MCF 10A (cell line): ENCODE measurements at regions of chr3 and their contacts with region 1.

Region 1: DNA sequence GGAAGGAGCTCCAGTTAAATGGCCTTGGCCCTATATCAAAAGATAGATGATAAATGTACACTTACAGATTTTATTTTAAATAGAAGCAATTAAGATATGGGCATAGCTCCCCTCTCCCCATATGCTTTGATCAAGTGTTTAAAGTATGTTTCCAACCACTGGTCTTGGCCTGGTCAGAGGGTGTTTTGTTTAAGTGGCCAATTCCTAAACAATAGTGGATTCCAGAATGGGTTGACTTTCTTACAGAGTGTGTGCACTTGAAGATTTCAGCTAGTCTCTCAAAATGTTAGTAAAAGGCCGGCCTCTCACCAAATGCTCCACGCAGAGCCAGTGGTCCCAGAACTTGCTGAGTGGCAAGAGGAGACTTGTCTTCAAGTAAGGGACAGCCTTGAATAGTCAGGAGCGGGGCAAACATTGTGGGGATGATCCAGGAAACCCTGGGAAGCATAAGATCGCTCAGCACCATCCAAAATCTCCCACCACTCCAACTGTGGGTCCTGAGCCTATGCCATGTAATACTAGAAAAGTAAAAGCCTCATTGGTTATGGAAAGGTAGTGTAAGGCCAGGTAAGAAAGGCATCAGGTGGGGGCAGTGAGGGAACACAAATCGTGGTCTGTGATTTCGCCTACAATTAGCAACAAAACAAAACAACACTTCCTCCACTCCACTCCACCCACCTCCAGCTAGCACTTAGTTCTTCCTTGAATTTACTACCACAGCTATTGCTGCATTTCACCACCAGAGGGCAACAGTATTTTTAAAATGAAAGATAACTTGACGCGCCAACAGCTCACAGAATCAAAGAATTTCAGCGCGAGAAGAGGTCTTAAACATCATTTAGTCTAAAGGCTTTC is 4.8 kb downstream of the RARRES1 start:
- DNase-seq: peak; percentile 72
- H3K4me3 Mint-ChIP-seq: peak overlapping the region; percentile 38
- H3K27ac Mint-ChIP-seq: no peak overlapping the region
- H3K4me1 Mint-ChIP-seq: peaks cover 11% of the 10 kb centered on the region
- H3K27me3 Mint-ChIP-seq: no peaks in the 10 kb centered on the region
- CTCF ChIP-seq: peak; percentile 47

Region 2: DNA sequence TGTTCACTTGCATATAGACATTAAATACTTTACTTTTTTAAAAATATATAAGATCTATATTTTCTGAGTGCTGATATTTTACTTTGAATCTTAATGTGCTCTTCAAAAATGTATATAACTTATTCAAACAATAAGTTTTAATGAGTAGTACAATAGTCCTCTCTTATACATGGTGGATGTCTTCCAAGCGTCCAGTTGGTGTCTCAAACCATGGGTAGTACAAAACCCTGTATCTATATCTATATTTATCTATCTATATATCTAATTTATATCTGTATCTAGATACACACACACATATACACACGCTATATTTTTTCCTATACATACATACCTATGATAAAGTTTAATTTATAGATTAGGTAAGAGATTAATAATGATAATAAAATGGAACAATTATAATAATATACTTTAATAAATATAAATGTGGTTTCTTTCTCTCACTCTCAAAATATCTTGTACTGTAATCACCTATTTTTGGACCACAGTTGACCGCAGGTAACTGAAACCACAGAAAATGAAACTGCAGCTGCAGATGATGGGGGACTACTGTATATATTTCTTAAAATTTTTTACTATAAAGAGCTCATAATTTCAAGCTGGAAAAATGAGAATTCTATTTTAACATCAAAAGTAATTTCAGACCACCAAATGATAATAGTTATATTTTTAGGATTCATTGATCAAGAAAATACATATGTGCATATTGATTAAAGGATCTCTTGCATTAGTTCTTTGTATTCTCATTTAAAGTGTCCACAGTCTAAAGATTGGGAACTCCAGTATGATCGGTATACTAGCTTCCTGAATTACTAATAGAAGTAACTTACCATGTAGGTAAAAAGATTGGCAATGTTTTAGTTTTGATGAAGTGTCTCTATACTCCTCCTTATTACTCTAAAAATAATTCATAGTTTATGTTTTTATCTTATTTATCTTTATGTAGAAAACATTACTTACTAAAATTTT is 371.5 kb before region 1 on chr3:
- CTCF ChIA-PET with region 1: no interaction called
- POLR2A ChIA-PET with region 1: no interaction called
- intact Hi-C with region 1: no loop called
- DNase-seq: no peak
- H3K4me3 Mint-ChIP-seq: no peak overlapping the region
- H3K27ac Mint-ChIP-seq: no peak overlapping the region
- H3K4me1 Mint-ChIP-seq: no peaks in the 10 kb centered on the region
- H3K27me3 Mint-ChIP-seq: no peaks in the 10 kb centered on the region
- CTCF ChIP-seq: no peak

Region 3: DNA sequence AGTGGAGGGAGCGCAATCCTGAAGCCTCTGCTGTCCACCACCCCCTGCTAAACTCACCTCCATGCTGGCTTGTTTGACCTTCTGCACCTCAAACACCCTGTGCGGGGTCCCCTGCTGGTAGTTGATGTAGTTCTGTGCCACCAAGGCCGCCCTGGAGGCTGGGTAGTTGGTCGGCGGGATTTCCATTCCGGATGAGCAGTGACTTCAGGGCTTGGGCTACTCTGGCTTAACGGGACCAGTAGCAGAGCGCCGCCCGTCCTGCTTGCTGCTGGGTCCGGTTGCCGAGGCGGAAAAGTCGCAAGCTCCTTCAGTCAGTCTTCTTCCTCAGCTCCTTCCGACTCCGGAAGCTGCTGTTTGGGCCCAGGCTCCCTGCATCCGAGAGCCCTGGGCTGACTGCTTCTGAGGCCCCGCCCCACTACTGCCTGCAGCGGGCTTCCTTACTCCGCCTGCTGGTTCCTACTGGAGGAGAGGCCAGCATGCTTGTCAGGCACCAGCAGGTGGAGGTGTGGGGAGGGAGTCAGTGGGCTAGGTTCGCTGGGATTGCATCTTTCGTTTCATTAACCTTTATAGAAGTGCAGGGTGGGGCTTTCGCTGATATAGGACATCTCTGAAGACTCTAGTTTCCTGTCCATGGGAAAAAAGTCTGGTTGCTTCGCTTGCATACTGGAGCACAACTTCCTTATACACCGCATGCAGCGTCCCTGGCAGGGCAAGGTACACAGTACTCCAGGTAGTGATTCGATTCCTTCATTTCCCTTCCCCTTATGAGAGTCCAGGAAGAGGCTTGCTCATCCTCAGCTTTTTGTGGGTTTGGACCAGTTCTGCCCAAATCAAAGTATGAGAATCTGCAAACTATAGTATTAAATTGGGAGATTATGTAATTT is 54.9 kb before region 1 on chr3 and contains the start of gene LXN:
- CTCF ChIA-PET with region 1: interaction called, 3 read pairs
- POLR2A ChIA-PET with region 1: no interaction called
- intact Hi-C with region 1: loop called (anchors 5 kb)
- DNase-seq: peak; percentile 92
- H3K4me3 Mint-ChIP-seq: peak within 1 kb of the TSS; percentile 79
- H3K27ac Mint-ChIP-seq: peak within 1 kb of the TSS; percentile 87
- H3K4me1 Mint-ChIP-seq: peaks cover 16% of the 10 kb centered on the region
- H3K27me3 Mint-ChIP-seq: no peaks in the 10 kb centered on the region
- CTCF ChIP-seq: peak; percentile 51
- total RNA-seq, gene LXN: 3.4 and 4.4 TPM in 2 replicates

Region 4: GRCh38 chr3:158702815-158703481 is 24.5 kb before region 1 on chr3:
- CTCF ChIA-PET with region 1: interaction called, 12 read pairs
- POLR2A ChIA-PET with region 1: no interaction called
- intact Hi-C with region 1: no loop called
- DNase-seq: no peak
- H3K4me3 Mint-ChIP-seq: no peak overlapping the region
- H3K27ac Mint-ChIP-seq: peak overlapping the region; percentile 14
- H3K4me1 Mint-ChIP-seq: peaks cover 6% of the 10 kb centered on the region
- H3K27me3 Mint-ChIP-seq: no peaks in the 10 kb centered on the region
- CTCF ChIP-seq: no peak

Region 5: GRCh38 chr3:158742871-158743663 is 15.6 kb after region 1 on chr3:
- CTCF ChIA-PET with region 1: interaction called, 23 read pairs
- POLR2A ChIA-PET with region 1: no interaction called
- intact Hi-C with region 1: no loop called
- DNase-seq: no peak
- H3K4me3 Mint-ChIP-seq: no peak overlapping the region
- H3K27ac Mint-ChIP-seq: no peak overlapping the region
- H3K4me1 Mint-ChIP-seq: peaks cover 6% of the 10 kb centered on the region
- H3K27me3 Mint-ChIP-seq: no peaks in the 10 kb centered on the region
- CTCF ChIP-seq: no peak

Region 6: GRCh38 chr3:158762701-158763100 is 35.3 kb after region 1 on chr3:
- CTCF ChIA-PET with region 1: interaction called, 24 read pairs
- POLR2A ChIA-PET with region 1: interaction called, 3 read pairs
- intact Hi-C with region 1: no loop called
- DNase-seq: no peak
- H3K4me3 Mint-ChIP-seq: no peak overlapping the region
- H3K27ac Mint-ChIP-seq: no peak overlapping the region
- H3K4me1 Mint-ChIP-seq: no peaks in the 10 kb centered on the region
- H3K27me3 Mint-ChIP-seq: no peaks in the 10 kb centered on the region
- CTCF ChIP-seq: no peak

Region 7: DNA sequence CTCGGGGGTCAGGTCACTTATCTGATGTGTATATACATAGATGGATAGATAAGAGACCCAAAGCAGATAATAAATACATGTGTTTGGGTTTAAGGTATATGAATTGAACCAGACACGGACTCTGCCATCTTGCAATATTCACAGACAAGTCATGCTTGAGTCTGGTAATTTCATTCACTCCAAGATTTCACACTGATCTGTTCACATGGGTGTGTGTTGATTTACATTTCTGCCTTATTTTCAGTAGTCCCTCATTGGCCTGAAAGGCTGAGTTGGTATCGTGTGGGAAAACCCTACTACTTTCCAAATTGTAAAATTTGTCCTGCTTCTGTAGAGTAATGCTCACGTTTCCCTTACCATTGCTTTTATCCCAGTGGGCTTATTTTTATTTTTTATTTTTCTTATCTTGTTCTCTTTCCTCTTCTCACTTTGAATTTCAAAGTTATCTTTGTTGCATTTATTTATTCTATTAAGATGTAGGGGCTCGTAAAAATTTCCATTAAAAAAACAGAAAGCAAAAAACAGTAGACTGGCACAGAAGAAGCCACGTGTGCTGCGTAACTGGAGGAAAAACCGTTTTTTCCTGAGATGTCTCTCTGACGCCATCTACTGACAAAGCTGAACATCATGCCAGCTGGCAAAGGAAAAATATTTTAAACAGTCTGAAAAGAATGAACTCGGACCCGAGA is 63.6 kb after region 1 on chr3:
- CTCF ChIA-PET with region 1: interaction called, 238 read pairs
- POLR2A ChIA-PET with region 1: interaction called, 13 read pairs
- intact Hi-C with region 1: loop called (anchors 1 kb)
- DNase-seq: peak; percentile 71
- H3K4me3 Mint-ChIP-seq: peak overlapping the region; percentile 63
- H3K27ac Mint-ChIP-seq: no peak overlapping the region
- H3K4me1 Mint-ChIP-seq: peaks cover 20% of the 10 kb centered on the region
- H3K27me3 Mint-ChIP-seq: no peaks in the 10 kb centered on the region
- CTCF ChIP-seq: peak; percentile 79

Region 8: GRCh38 chr3:158845765-158846350 is 118.4 kb after region 1 on chr3:
- CTCF ChIA-PET with region 1: no interaction called
- POLR2A ChIA-PET with region 1: no interaction called
- intact Hi-C with region 1: no loop called
- DNase-seq: peak; percentile 51
- H3K4me3 Mint-ChIP-seq: no peak overlapping the region
- H3K27ac Mint-ChIP-seq: no peak overlapping the region
- H3K4me1 Mint-ChIP-seq: no peaks in the 10 kb centered on the region
- H3K27me3 Mint-ChIP-seq: no peaks in the 10 kb centered on the region
- CTCF ChIP-seq: peak; percentile 72

Region 9: DNA sequence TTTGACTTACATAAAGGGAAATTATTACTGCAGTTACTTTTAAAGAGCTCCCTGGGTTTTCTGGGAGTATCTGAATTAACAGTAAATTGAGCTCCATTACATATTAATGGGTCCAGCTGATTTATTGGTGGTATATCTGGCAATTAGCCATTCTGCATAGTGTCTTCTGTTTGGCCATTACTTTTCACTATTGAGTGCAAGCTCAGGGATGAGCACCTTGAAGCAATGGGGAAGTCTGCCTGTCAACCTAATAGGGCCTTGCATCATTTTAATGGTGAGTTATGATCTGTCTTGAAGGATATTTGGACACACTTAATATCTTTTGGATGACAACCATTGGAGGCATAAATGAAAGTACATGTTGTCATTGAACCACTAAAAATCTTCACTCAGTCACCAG is 148.3 kb after region 1 on chr3:
- CTCF ChIA-PET with region 1: no interaction called
- POLR2A ChIA-PET with region 1: no interaction called
- intact Hi-C with region 1: no loop called
- DNase-seq: no peak
- H3K4me3 Mint-ChIP-seq: no peak overlapping the region
- H3K27ac Mint-ChIP-seq: no peak overlapping the region
- H3K4me1 Mint-ChIP-seq: no peaks in the 10 kb centered on the region
- H3K27me3 Mint-ChIP-seq: peaks cover 11% of the 10 kb centered on the region
- CTCF ChIP-seq: no peak